ENCODE measurements at regions of chr17 and their contacts with region 1.

Region 1: DNA sequence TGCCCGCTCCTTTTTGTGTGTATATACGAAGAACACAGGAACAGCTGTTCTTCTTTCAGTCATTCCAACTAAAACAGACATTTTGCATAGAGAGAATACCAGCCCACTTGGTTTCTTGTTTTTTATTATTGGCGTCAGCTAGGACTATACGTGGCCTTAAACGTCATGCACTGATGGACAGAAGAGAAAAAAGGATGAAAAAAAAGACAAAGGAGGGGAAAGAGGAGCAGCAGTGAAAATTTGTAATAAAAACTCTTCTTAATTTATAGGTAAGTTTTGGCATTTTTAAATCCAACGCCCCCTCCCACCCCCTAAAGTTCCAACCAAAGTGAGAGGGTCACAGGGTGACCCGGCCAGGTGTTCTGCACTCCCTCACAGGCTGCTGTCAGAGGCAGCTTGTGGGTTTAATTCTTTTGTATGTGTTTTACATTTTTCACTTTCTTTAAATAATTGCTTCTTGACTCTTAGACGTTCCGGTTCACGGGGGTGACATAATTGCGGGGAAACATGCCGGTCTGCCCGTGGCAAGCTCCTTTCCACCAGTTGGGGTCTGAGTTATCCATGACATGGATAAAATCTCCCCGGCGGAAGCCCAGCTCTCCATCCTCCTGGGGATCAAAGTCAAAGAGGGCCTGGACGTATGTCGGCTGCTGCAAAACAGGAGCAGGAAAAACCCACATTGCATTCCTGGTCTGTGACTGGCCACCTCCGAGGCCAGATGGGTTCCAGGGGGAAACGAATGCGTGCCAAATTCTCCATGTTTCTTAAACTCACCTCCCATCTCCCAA is 30.9 kb upstream of the SLC25A19 start:
- DNase-seq: no peak
- ATAC-seq: no peak
- H3K4me3 ChIP-seq: no peak overlapping the region
- H3K27ac ChIP-seq: no peak overlapping the region
- H3K4me1 ChIP-seq: no peaks in the 10 kb centered on the region
- CTCF ChIP-seq: no peak
- EP300 ChIP-seq: no peak
- POLR2A ChIP-seq: no peak
- RAD21 ChIP-seq: no peak

Region 2: GRCh38 chr17:75271233-75271954 is 48.7 kb before region 1 on chr17:
- CTCF ChIA-PET with region 1: interaction called, 15 read pairs
- POLR2A ChIA-PET with region 1: interaction called, 4 read pairs
- DNase-seq: peak; percentile 80 to 91
- ATAC-seq: peak; percentile 61 to 63
- H3K4me3 ChIP-seq: peak overlapping the region; percentile 93
- H3K27ac ChIP-seq: peak overlapping the region; percentile 95 to 96
- H3K4me1 ChIP-seq: peaks cover 26% of the 10 kb centered on the region
- CTCF ChIP-seq: peak; percentile 92
- EP300 ChIP-seq: no peak
- POLR2A ChIP-seq: peak; percentile 78
- RAD21 ChIP-seq: peak; percentile 16 to 49; a peak in 3 of 5 replicates

Region 3: DNA sequence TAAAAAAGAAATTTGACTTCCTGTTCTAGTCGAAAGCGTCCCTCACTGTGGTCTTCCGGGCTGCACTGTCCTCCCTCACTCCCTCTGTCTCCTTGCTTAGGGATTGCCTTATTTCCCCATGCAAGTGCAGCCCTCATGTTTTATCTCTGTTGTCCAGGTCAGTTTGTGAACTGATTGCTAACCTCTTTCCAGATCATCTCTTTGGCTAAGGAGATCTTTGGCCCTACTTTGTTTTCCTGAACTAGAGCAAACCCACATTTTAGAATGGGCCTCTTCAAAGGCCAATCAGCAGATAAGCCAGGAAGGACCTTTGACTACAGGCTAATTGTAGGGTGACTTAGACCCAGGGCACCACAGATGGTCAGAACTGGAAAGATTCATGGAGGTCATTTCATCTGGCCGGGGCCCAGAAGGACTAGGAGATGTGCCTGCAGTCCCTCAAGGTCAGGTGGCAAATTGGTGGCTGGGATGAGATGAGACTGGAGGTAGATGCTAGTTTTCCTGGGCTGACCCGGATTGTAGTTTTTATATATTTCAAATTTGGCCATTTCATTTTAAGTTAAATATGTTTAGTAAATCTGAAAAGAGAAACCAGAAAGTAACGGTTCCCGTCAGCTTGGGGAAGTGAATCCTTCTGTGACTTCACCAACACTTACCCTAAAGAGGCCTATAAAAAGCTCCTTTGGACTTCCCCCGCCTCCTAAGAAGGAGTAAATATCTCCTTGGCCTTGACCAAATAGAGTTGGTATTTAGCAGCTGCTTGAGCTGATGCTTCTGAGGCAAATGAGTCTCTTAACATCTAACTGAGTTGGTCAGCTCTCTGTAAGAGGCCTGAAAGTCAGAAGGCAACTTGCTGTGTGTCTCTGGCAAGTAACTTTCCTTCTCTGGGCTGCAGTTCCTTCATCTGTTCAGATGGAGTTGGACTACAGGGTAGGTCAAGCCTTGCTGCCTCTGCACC is 24.6 kb before region 1 on chr17:
- CTCF ChIA-PET with region 1: interaction called, 19 read pairs
- POLR2A ChIA-PET with region 1: no interaction called
- DNase-seq: no peak
- ATAC-seq: no peak
- H3K4me3 ChIP-seq: no peak overlapping the region
- H3K27ac ChIP-seq: no peak overlapping the region
- H3K4me1 ChIP-seq: peaks cover 1% of the 10 kb centered on the region; the same call in 1 of the 3 replicates
- CTCF ChIP-seq: no peak
- EP300 ChIP-seq: no peak
- POLR2A ChIP-seq: no peak
- RAD21 ChIP-seq: no peak

Region 4: DNA sequence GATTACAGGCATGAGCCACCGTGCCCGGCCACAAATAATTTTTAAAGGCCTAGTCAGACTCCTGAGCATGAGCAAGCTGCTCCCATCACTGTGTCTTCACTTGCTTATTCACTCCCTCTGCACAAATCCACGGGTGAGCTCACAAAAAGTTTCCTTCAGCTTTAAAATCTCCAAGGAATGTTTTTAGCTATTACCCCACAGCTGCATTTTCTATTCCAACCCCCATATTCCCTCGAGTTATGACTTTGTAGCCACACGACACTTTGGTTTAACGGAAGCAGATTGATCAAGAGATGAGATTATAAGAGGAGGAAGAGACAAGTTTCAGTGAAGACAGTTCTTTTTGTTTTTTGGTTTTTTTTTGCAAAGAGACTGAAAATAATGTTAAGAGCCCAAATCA is 18.2 kb after region 1 on chr17:
- CTCF ChIA-PET with region 1: interaction called, 31 read pairs
- POLR2A ChIA-PET with region 1: no interaction called
- DNase-seq: no peak
- ATAC-seq: no peak
- H3K4me3 ChIP-seq: no peak overlapping the region
- H3K27ac ChIP-seq: no peak overlapping the region
- H3K4me1 ChIP-seq: no peaks in the 10 kb centered on the region
- CTCF ChIP-seq: no peak
- EP300 ChIP-seq: no peak
- POLR2A ChIP-seq: no peak
- RAD21 ChIP-seq: no peak

Region 5: GRCh38 chr17:75373280-75373679 is 53.2 kb after region 1 on chr17:
- CTCF ChIA-PET with region 1: interaction called, 23 read pairs
- POLR2A ChIA-PET with region 1: interaction called, 5 read pairs
- DNase-seq: no peak
- ATAC-seq: no peak
- H3K4me3 ChIP-seq: no peak overlapping the region
- H3K27ac ChIP-seq: no peak overlapping the region
- H3K4me1 ChIP-seq: peaks cover 6% of the 10 kb centered on the region; the same call in 2 of the 3 replicates
- CTCF ChIP-seq: no peak
- EP300 ChIP-seq: no peak
- POLR2A ChIP-seq: no peak
- RAD21 ChIP-seq: no peak

Region 6: DNA sequence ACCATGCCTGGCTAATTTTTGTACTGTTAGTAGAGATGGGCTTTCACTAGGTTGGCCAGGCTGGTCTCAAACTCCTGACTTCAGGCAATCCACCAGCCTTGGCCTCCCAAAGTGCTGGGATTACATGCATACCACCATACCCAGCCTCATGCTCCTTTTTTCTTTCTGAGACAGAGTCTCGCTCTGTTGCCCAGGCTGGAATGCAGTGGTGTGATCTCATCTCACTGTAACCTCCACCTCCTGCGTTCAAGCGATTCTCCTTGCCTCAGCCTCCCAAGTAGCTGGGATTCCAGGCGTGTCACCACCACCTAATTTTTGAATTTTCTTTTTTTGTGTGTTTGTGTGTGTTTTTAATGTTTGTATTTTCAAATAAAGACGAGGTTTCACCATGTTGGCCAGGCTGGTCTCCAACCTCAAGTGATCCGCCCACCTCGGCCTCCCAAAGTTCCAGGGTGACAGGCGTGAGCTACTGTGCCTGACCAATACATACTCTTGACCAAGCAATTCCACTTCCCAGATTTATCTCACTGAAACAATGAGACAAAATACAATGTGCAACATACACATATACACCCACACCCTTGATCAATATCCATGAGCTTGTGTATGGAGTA is 80.3 kb after region 1 on chr17:
- CTCF ChIA-PET with region 1: interaction called, 272 read pairs
- POLR2A ChIA-PET with region 1: no interaction called
- DNase-seq: no peak
- ATAC-seq: no peak
- H3K4me3 ChIP-seq: no peak overlapping the region
- H3K27ac ChIP-seq: no peak overlapping the region
- H3K4me1 ChIP-seq: peaks cover 16% of the 10 kb centered on the region
- CTCF ChIP-seq: no peak
- EP300 ChIP-seq: no peak
- POLR2A ChIP-seq: no peak
- RAD21 ChIP-seq: no peak

Measured in A549 (cell line).